ENCODE measurements at regions of chr4 and their contacts with region 1.

Region 1: DNA sequence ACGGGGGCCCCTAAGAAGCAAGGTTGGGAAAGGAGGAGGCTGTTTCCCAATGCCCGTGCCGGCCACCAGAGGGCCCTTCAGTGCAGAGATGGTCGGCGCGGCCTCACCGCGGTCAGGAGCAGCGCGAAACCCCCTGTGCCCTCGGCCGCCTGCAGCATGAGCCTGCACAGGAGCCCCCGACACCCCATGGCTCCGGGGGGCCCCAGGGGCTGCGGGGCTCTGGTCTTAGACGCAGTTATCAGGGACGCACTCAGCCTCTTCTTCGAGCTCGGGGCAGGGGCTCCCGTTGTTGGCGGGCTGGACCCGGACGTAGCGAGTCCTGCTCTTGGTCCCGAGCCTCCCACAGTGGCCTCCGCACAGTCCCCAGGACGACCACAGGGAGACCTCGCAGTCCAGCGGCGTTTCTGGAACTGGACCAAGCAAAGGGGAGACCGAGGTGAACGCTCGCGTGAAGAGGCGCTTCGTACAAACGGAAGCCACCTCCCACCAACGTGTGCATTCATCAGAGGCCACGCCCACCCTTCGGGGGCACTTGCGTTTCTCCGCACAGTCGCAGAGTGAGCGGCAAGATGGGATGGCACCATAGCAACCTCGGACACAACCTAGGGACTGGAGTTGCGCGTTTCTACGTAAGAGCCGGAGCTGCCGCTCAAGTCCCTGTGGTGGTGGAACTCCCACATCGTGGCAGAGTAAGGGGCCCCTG is 5.0 kb downstream of the SPON2 start:
- DNase-seq: peak; percentile 68
- H3K4me3 ChIP-seq: peak overlapping the region; percentile 35 to 42
- H3K27ac ChIP-seq: peak overlapping the region; percentile 63 to 67
- H3K4me1 ChIP-seq: no peaks in the 10 kb centered on the region
- H3K27me3 ChIP-seq: no peaks in the 10 kb centered on the region
- CTCF ChIP-seq: peak; percentile 80 to 94 (median 88)
- POLR2A ChIP-seq: no peak

Region 2: GRCh38 chr4:1209821-1210210 is 42.4 kb after region 1 on chr4:
- intact Hi-C with region 1: loop called (anchors 5 kb)
- DNase-seq: no peak
- H3K4me3 ChIP-seq: no peak overlapping the region
- H3K27ac ChIP-seq: peak overlapping the region; percentile 74 to 94
- H3K4me1 ChIP-seq: peaks cover 55% of the 10 kb centered on the region
- H3K27me3 ChIP-seq: no peaks in the 10 kb centered on the region
- CTCF ChIP-seq: no peak
- POLR2A ChIP-seq: no peak

Region 3: GRCh38 chr4:1249148-1249730 is 81.8 kb after region 1 on chr4:
- intact Hi-C with region 1: loop called (anchors 2 kb)
- DNase-seq: peak; percentile 86
- H3K4me3 ChIP-seq: peak overlapping the region; percentile 65 to 92
- H3K27ac ChIP-seq: peak overlapping the region; percentile 94 to 97
- H3K4me1 ChIP-seq: peaks cover 37% of the 10 kb centered on the region
- H3K27me3 ChIP-seq: no peaks in the 10 kb centered on the region
- CTCF ChIP-seq: no peak
- POLR2A ChIP-seq: peak; percentile 63